ENCODE measurements at regions of chr6 and their contacts with region 1.

Region 1: GRCh38 chr6:43427406-43428111 is at the start of gene ABCC10:
- DNase-seq: peak; percentile 95 to 97 (median 97)
- ATAC-seq: peak; percentile 98 to 99 (median 99)
- H3K4me3 ChIP-seq: peak within 1 kb of the TSS; percentile 49 to 92 (median 88)
- H3K27ac ChIP-seq: peak within 1 kb of the TSS; percentile 49 to 94 (median 89)
- H3K4me1 ChIP-seq: peaks cover 5 to 26% (median 13%) of the 10 kb centered on the region in 12 donors
- H3K27me3 ChIP-seq: no peaks in the 10 kb centered on the region
- CTCF ChIP-seq: peak in 11 of 12 donors; percentile 27 to 74 (median 40)
- POLR2A ChIP-seq: peak in 1 of 2 donors; percentile 82
- total RNA-seq, gene ABCC10: 6.4 to 18.3 (median 10.3) TPM

Region 2: GRCh38 chr6:43250992-43251373 is 176.6 kb before region 1 on chr6:
- intact Hi-C with region 1: no loop called
- DNase-seq: no peak
- ATAC-seq: no peak
- H3K4me3 ChIP-seq: no peak overlapping the region
- H3K27ac ChIP-seq: no peak overlapping the region
- H3K4me1 ChIP-seq: peaks cover 0 to 17% (median 9%) of the 10 kb centered on the region in 12 donors
- H3K27me3 ChIP-seq: peaks cover 0 to 28% (median 10%) of the 10 kb centered on the region in 9 donors
- CTCF ChIP-seq: no peak
- POLR2A ChIP-seq: no peak

Region 3: GRCh38 chr6:43369174-43370022 is 58.2 kb before region 1 on chr6 and contains the start of gene ZNF318:
- intact Hi-C with region 1: loop called in 6 of 10 experiments (anchors 1 to 10 kb)
- DNase-seq: peak; percentile 97 to 98 (median 97)
- ATAC-seq: peak; percentile 98 to 99 (median 99)
- H3K4me3 ChIP-seq: peak within 1 kb of the TSS; percentile 68 to 99 (median 84)
- H3K27ac ChIP-seq: peak within 1 kb of the TSS; percentile 19 to 94 (median 88)
- H3K4me1 ChIP-seq: peaks cover 0 to 29% (median 19%) of the 10 kb centered on the region in 12 donors
- H3K27me3 ChIP-seq: no peaks in the 10 kb centered on the region
- CTCF ChIP-seq: peak in 1 of 12 donors; percentile 5
- POLR2A ChIP-seq: peak in 1 of 2 donors; percentile 55
- total RNA-seq, gene ZNF318: 10.5 to 15.7 (median 14.3) TPM

Measured in heart left ventricle (tissue), 16 donors.